ENCODE measurements at regions of chr3 and their contacts with region 1.

Region 1: DNA sequence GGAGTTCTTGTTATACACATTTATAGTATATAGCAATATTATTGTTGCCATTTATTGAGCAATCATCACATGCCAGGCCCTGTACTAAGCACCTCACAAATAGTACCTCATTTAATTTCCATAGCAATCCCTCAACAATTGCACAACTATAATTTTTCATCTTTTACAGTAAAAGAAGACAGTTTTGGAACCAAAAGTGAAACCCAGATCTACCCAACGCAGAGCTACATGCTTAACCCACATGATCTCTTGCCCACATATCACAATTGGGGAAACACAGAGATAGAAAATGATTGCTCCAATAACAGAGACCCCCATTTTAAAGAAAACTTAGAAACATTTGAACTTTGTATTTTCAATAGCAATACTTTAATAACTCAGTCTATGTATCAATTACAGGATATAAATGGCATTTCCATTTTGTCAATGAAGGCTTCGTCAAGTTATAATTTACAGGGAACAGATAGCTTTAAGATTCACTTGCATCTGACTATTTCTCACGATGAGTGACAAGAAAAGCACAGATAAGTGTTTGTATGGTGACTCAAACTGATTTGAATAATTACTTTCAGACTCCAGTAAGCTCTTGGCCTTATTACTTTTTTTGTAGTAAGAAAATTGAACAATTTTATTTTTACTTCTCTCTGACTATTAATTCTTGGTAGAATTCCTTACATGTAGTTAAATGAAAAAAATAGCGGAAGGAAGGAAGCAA is 38.7 kb upstream of the CCDC50 start:
- DNase-seq: peak in 1 of 9 donors; percentile 1
- ATAC-seq: no peak
- H3K4me3 ChIP-seq: no peak overlapping the region
- H3K4me3 Mint-ChIP-seq: peak overlapping the region in 5 of 10 donors; percentile 1 to 21 (median 11)
- H3K27ac ChIP-seq: no peak overlapping the region
- H3K27ac Mint-ChIP-seq: peak overlapping the region in 3 of 9 donors; percentile 11 to 39 (median 19)
- H3K4me1 ChIP-seq: no peaks in the 10 kb centered on the region
- H3K4me1 Mint-ChIP-seq: peaks cover 0 to 5% (median 0%) of the 10 kb centered on the region in 7 donors
- H3K27me3 ChIP-seq: no peaks in the 10 kb centered on the region
- H3K27me3 Mint-ChIP-seq: no peaks in the 10 kb centered on the region

Region 2: DNA sequence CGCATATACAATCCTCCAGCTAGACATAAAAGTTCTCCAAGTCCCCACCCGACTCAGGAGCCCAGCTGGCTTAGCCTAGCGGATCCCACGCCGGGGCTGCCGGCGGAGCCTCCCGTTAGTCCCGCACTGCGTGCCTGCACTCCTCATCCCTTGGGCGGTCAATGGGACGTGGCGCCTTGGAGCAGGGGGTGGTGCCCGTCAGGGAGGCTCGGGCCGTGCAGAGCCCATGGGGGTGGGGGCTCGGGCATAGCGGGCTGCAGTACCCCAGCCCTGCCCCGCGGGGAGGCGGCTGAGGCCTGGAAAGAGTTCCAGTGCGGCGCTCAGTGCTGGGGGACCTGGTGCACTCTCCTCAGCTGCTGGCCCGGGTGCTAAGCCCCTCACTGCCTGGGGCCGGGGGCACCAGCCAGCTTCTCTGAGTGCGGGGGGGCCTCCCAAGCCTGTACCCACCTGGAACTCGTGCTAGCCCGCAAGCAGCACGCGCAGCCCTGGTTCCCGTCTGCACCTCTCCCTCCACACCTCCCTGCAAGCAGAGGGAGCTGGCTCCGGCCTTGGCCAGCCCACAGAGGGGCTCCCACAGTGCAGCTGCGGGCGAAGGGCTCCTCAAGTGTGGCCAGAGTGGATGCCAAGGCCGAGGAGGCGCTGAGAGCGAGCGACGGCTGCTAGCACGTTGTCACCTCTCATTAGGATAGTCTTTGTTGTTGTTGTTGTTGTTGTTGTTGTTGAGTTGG is 26.6 kb after region 1 on chr3:
- CTCF ChIA-PET with region 1: no interaction called
- POLR2A ChIA-PET with region 1: no interaction called
- intact Hi-C with region 1: no loop called
- DNase-seq: no peak
- ATAC-seq: no peak
- H3K4me3 ChIP-seq: no peak overlapping the region
- H3K4me3 Mint-ChIP-seq: no peak overlapping the region
- H3K27ac ChIP-seq: no peak overlapping the region
- H3K27ac Mint-ChIP-seq: no peak overlapping the region
- H3K4me1 ChIP-seq: no peaks in the 10 kb centered on the region
- H3K4me1 Mint-ChIP-seq: no peaks in the 10 kb centered on the region
- H3K27me3 ChIP-seq: no peaks in the 10 kb centered on the region
- H3K27me3 Mint-ChIP-seq: peaks cover 0 to 3% (median 0%) of the 10 kb centered on the region in 5 donors

Region 3: DNA sequence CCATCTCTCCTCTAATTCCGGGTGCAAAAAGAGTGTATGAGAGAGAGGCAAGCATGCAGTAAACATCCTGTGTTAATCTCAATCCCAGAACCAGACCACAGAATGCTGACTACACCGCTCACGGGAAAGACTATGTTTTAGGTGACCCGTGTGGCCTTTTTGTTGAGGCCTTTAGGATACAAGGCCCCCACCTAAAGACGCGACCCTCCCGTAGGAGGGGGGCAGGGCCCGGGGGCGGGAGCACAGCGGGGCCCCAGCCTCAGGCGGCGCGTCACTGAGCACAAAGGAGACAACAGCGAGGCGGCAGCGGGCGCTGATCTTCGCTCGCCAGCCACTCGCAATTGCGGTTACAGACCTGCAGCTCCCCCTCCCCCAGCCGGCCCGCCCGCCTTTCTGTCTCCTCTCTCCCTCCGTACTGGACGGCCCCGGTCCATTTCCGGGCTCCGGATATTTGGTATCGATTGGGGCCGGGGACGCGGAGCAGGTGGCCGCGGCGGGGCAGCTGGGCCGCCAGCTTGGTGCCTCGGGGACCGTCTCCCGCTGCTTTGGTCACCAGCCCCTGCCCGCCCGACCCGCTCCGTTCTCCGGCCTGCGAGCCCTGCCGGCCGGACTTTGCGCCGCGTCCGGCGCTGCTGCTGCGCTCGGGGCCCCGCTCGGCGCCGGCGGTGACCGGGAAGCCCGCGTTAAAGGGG is 38.6 kb after region 1 on chr3 and contains the start of gene CCDC50:
- CTCF ChIA-PET with region 1: no interaction called
- POLR2A ChIA-PET with region 1: no interaction called
- intact Hi-C with region 1: loop called in 1 of 2 experiments (anchors 5 kb)
- DNase-seq: peak in 7 of 9 donors; percentile 3 to 56 (median 19)
- ATAC-seq: peak; percentile 70
- H3K4me3 ChIP-seq: peak within 1 kb of the TSS; percentile 32
- H3K4me3 Mint-ChIP-seq: peak within 1 kb of the TSS; percentile 47 to 82 (median 76)
- H3K27ac ChIP-seq: peak within 1 kb of the TSS; percentile 44
- H3K27ac Mint-ChIP-seq: peak within 1 kb of the TSS in 4 of 9 donors; percentile 53 to 80 (median 72)
- H3K4me1 ChIP-seq: no peaks in the 10 kb centered on the region
- H3K4me1 Mint-ChIP-seq: peaks cover 0 to 21% (median 13%) of the 10 kb centered on the region in 7 donors
- H3K27me3 ChIP-seq: no peaks in the 10 kb centered on the region
- H3K27me3 Mint-ChIP-seq: peaks cover 22 to 41% (median 31%) of the 10 kb centered on the region in 5 donors
- total RNA-seq, gene CCDC50: 0.92 to 17.9 (median 6.2) TPM

Measured in naive thymus-derived CD4-positive, alpha-beta T cell (primary cell).